ENCODE measurements at regions of chr15 and their contacts with region 1.

Region 1: GRCh38 chr15:59528965-59529402 is 82.6 kb upstream of the GCNT3 start:
- DNase-seq: peak; percentile 75 to 96
- H3K4me3 ChIP-seq: no peak overlapping the region
- H3K27ac ChIP-seq: no peak overlapping the region
- H3K4me1 ChIP-seq: no peaks in the 10 kb centered on the region
- H3K27me3 ChIP-seq: no peaks in the 10 kb centered on the region
- CTCF ChIP-seq: peak; percentile 64 to 86 (median 82)
- EP300 ChIP-seq: no peak
- POLR2A ChIP-seq: no peak
- RAD21 ChIP-seq: peak; percentile 95 to 97

Region 2: DNA sequence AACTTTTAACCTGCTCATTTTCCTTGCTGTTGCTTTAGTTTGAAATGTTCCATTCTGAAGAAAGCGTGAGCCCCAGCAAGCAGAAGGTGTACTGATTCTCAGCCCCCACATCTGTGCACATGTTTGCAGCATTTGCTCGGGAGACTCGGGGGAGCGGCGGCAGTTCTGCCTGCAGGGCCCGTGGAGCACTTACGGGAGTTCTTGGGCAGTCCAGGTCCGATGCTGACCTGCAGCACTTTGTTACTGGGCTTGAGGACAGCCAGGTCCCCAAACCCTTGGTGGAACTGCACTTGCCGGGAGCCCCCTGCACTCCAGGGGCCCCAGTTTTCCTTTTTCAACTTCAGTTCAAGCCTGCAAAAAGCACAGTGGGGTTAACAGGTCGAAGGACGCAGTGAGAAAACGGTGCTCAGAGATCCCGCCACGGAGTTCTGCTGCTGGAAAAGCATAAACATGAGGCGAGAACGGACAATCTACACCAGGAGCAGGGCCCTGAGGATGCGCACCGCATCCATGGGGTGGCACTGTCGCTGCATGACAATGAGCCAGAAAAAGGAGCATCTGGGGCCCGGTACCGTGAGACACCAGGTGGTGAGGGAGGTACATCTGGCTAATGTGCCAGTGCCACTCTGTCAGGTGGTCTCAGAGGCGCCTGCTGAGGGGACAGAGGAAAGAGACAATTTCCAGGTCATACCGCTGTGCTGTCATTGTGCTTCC is 367.9 kb before region 1 on chr15:
- CTCF ChIA-PET with region 1: interaction called, 18 read pairs
- POLR2A ChIA-PET with region 1: no interaction called
- DNase-seq: peak in 1 of 2 experiments; percentile 73
- H3K4me3 ChIP-seq: no peak overlapping the region
- H3K27ac ChIP-seq: no peak overlapping the region
- H3K4me1 ChIP-seq: no peaks in the 10 kb centered on the region; a peak in 2 of 7 replicates
- H3K27me3 ChIP-seq: no peaks in the 10 kb centered on the region
- CTCF ChIP-seq: peak; percentile 78 to 82 (median 80)
- EP300 ChIP-seq: no peak
- POLR2A ChIP-seq: no peak
- RAD21 ChIP-seq: peak; percentile 84 to 88

Region 3: GRCh38 chr15:59313641-59314332 is 215.2 kb before region 1 on chr15:
- CTCF ChIA-PET with region 1: no interaction called
- POLR2A ChIA-PET with region 1: no interaction called
- DNase-seq: no peak
- H3K4me3 ChIP-seq: no peak overlapping the region
- H3K27ac ChIP-seq: no peak overlapping the region
- H3K4me1 ChIP-seq: peaks cover 2 to 13% (median 9%) of the 10 kb centered on the region in 4 experiments; a peak in 5 of 7 replicates
- H3K27me3 ChIP-seq: no peaks in the 10 kb centered on the region
- CTCF ChIP-seq: no peak
- EP300 ChIP-seq: no peak
- POLR2A ChIP-seq: no peak
- RAD21 ChIP-seq: no peak

Region 4: GRCh38 chr15:59410391-59410896 is 118.5 kb before region 1 on chr15:
- CTCF ChIA-PET with region 1: no interaction called
- POLR2A ChIA-PET with region 1: no interaction called
- DNase-seq: no peak
- H3K4me3 ChIP-seq: no peak overlapping the region
- H3K27ac ChIP-seq: no peak overlapping the region
- H3K4me1 ChIP-seq: no peaks in the 10 kb centered on the region
- H3K27me3 ChIP-seq: no peaks in the 10 kb centered on the region; a peak in 1 of 7 replicates
- CTCF ChIP-seq: no peak
- EP300 ChIP-seq: no peak
- POLR2A ChIP-seq: no peak
- RAD21 ChIP-seq: no peak

Region 5: DNA sequence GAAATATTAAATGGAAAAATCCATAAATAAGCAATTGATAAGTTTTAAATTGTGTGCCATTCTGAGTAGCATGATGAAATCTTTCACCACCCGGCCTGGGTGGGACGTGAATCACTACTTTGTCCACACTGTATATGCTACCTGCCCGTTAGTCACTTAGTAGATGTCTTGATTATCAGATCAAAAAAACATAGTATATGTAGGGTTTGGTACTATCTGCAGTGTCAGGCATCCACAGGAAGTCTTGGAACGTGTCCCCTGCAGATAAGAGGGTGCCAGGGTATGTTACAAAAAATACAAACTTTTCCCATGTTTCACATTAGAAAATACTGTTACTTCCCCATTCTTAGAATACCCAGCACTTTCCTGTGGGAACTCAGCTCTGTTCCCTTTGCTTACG is 55.8 kb before region 1 on chr15:
- CTCF ChIA-PET with region 1: no interaction called
- POLR2A ChIA-PET with region 1: no interaction called
- DNase-seq: no peak
- H3K4me3 ChIP-seq: no peak overlapping the region
- H3K27ac ChIP-seq: no peak overlapping the region
- H3K4me1 ChIP-seq: no peaks in the 10 kb centered on the region
- H3K27me3 ChIP-seq: no peaks in the 10 kb centered on the region
- CTCF ChIP-seq: no peak
- EP300 ChIP-seq: no peak
- POLR2A ChIP-seq: no peak
- RAD21 ChIP-seq: no peak

Region 6: GRCh38 chr15:59501597-59501996 is 27.4 kb before region 1 on chr15:
- CTCF ChIA-PET with region 1: interaction called, 18 read pairs
- POLR2A ChIA-PET with region 1: no interaction called
- DNase-seq: peak; percentile 9 to 63
- H3K4me3 ChIP-seq: no peak overlapping the region
- H3K27ac ChIP-seq: no peak overlapping the region
- H3K4me1 ChIP-seq: no peaks in the 10 kb centered on the region
- H3K27me3 ChIP-seq: no peaks in the 10 kb centered on the region
- CTCF ChIP-seq: peak in 2 of 3 experiments; percentile 90; a peak in 3 of 4 replicates
- EP300 ChIP-seq: no peak
- POLR2A ChIP-seq: no peak
- RAD21 ChIP-seq: peak; percentile 95 to 98

Region 7: DNA sequence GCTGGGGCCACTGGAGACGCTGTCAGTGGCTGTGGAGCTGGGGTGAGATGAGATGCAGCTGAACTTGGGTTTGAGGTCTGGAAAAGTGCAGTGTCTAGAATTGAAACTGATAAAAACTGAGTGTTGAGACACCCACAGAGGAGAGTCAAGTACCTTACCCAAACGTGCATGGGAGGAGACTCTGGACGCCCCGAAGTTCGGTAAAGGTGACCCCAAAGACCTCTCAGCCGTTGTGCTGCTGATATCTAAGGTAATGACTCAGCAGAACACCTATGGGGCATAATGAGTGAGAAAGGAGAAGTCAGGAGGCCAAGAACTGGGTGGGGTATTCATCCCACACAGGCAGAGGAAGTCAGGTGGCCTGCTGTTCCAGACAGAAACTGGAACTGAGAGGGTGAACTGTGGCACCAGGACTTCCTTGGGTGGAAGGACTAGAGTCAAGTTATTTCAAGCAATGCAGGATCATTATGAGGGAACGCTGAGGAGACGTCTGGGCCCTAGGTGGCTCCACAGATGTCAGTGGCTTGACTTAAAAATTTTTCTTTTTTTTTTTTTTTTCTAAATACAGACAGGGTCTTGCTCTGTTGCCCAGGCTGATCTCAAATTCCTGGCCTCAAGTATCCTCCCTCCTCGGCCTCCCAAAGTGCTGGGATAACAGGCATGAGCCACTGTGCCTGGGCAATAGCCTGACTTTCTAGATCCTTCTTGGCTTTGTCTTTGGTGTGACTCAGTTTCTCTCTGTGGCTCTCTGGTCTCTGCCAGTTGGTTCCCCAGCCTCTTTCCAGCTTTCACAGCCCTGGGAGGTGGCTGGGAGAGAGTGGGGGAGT is 14.9 kb after region 1 on chr15:
- CTCF ChIA-PET with region 1: interaction called, 27 read pairs
- POLR2A ChIA-PET with region 1: no interaction called
- DNase-seq: no peak
- H3K4me3 ChIP-seq: no peak overlapping the region
- H3K27ac ChIP-seq: no peak overlapping the region
- H3K4me1 ChIP-seq: peaks cover 0 to 5% (median 1%) of the 10 kb centered on the region in 4 experiments; a peak in 2 of 7 replicates
- H3K27me3 ChIP-seq: peaks cover 0 to 30% (median 18%) of the 10 kb centered on the region in 4 experiments; a peak in 5 of 7 replicates
- CTCF ChIP-seq: no peak
- EP300 ChIP-seq: no peak
- POLR2A ChIP-seq: no peak
- RAD21 ChIP-seq: no peak

Region 8: DNA sequence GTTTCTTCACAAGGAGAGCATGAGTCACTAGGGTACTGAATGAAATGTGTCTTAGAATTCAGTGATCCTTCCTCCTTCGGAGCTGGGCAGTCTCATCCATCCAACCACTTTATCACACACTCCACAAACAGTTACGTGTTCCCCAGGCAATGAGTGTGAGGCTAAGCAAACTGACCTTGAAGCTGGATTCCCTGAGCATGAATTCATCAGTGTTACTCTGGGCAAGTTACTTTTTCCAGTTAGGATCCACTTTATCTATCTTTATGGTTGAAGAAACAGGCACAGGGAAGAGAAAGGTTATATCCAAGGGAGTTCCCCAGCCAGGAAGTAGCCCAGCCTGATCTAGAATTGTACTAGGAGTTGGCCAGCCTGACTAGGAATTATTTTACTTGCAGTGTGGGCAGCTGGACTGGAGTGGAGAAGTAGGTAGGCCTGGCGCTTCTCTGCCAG is 65.5 kb after region 1 on chr15:
- CTCF ChIA-PET with region 1: interaction called, 13 read pairs
- POLR2A ChIA-PET with region 1: no interaction called
- DNase-seq: no peak
- H3K4me3 ChIP-seq: no peak overlapping the region
- H3K27ac ChIP-seq: no peak overlapping the region
- H3K4me1 ChIP-seq: no peaks in the 10 kb centered on the region
- H3K27me3 ChIP-seq: no peaks in the 10 kb centered on the region
- CTCF ChIP-seq: no peak
- EP300 ChIP-seq: no peak
- POLR2A ChIP-seq: no peak
- RAD21 ChIP-seq: no peak

Region 9: DNA sequence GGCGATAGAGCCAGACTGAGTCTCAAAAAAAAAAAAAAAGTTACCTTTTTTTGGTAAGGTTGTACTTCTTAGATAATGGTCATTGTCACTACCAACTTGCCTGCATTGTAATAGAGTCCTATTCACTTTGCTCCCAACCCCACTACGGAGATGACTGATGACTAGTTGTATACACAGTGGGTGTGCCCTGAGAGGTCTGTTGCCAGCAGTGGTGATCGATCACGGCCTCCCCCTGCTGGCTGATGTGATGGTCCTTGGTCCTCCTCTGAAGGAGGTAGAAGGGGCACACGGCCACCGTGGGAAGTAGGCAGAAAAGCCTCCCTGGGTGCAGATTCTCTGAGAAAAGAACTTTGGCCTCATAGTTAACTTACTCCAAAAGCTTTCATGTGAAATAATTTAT is 93.3 kb after region 1 on chr15:
- CTCF ChIA-PET with region 1: interaction called, 40 read pairs
- POLR2A ChIA-PET with region 1: no interaction called
- DNase-seq: peak; percentile 21 to 66
- H3K4me3 ChIP-seq: no peak overlapping the region
- H3K27ac ChIP-seq: no peak overlapping the region
- H3K4me1 ChIP-seq: no peaks in the 10 kb centered on the region
- H3K27me3 ChIP-seq: no peaks in the 10 kb centered on the region
- CTCF ChIP-seq: peak; percentile 66 to 77 (median 67)
- EP300 ChIP-seq: no peak
- POLR2A ChIP-seq: no peak
- RAD21 ChIP-seq: peak; percentile 59 to 73